ENCODE measurements at regions of chr15 and their contacts with region 1.

Region 1: DNA sequence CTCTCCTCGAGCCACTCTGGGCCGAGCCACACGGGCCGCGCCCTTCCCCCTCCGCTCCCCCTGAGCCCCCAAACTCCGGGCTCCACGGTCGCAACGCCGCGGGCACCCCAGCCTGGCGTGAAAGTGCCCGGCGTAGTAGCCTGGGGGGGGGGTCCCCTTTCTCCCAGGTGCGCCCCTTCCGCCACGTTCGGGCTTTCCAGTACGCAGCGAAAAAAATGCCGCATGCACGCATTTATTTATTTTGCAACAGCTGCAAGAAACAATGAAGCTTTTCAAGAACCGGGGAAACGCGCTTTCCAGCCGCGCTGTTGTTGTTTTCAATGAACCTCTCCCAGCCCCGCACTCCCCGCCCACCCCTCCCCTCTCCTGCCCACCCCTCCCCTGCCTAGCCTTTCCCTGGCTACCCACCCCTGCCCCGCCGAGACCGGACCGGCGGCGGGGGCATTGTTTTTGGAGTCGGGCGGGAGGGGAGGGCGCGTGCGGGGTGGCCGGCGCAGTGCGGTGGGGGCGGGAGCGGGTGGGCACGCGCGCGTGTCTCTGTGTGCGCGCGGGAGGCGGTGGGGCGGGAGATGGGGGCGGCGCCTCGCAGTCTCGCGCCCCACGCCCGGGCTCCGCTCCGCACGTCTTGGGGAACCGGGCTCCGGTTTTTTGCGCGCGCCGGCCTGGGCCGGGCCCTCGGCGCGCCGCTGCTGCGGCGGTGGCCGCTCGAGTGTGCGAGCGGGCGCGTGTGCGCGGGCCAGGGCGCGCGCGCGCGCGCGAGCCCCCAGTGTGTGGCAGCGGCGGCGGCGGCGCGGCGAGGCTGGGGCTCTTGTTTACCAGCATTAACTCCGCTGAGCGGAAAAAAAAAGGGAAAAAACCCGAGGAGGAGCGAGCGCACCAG is at the start of gene IGF1R:
- DNase-seq: peak; percentile 94 to 95
- ATAC-seq: peak; percentile 73 to 91 (median 79)
- H3K4me3 ChIP-seq: peak within 1 kb of the TSS; percentile 84
- H3K4me3 Mint-ChIP-seq: peak within 1 kb of the TSS; percentile 91
- H3K27ac ChIP-seq: peak within 1 kb of the TSS; percentile 53
- H3K27ac Mint-ChIP-seq: peak within 1 kb of the TSS; percentile 60 to 99
- H3K4me1 ChIP-seq: peaks cover 24% of the 10 kb centered on the region
- H3K4me1 Mint-ChIP-seq: peaks cover 28 to 35% of the 10 kb centered on the region in 2 donors
- H3K27me3 ChIP-seq: peaks cover 15% of the 10 kb centered on the region
- H3K27me3 Mint-ChIP-seq: peaks cover 33 to 36% of the 10 kb centered on the region in 2 donors
- CTCF ChIP-seq: no peak
- total RNA-seq, gene IGF1R: 47.3 to 50.7 (median 49.0) TPM

Region 2: DNA sequence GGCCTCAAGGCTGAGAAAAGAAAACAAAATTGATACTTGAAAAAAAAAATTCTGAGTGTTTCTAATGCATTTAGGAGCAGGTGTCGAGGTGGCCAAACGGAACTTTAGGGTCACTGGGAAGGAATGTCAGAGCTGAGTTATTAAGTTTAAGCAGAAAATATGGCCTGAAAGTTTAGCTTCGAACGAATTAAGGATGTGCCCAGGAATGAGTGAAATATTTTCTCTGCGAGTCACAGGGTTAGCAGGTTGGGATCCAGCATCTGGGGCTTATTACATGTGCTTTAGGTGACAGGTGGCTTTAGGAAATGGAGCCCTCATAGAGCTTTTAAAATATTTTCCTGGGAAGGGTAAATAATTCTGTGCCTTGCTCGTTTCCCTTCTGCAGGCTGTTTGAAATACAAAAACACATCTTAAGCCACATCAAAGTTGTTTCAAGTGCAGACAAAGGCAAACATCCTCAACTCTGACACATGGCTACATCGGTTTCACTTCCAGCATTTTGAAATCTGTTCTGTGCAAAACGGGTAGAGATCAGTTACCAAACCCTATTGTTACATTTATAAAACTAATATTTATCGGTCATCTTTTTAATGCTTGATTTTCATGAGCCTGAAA is 830.6 kb before region 1 on chr15:
- intact Hi-C with region 1: no loop called
- DNase-seq: no peak
- ATAC-seq: no peak
- H3K4me3 ChIP-seq: no peak overlapping the region
- H3K4me3 Mint-ChIP-seq: no peak overlapping the region
- H3K27ac ChIP-seq: no peak overlapping the region
- H3K27ac Mint-ChIP-seq: no peak overlapping the region
- H3K4me1 ChIP-seq: no peaks in the 10 kb centered on the region
- H3K4me1 Mint-ChIP-seq: no peaks in the 10 kb centered on the region
- H3K27me3 ChIP-seq: no peaks in the 10 kb centered on the region
- H3K27me3 Mint-ChIP-seq: peaks cover 0 to 8% of the 10 kb centered on the region in 2 donors
- CTCF ChIP-seq: no peak

Region 3: DNA sequence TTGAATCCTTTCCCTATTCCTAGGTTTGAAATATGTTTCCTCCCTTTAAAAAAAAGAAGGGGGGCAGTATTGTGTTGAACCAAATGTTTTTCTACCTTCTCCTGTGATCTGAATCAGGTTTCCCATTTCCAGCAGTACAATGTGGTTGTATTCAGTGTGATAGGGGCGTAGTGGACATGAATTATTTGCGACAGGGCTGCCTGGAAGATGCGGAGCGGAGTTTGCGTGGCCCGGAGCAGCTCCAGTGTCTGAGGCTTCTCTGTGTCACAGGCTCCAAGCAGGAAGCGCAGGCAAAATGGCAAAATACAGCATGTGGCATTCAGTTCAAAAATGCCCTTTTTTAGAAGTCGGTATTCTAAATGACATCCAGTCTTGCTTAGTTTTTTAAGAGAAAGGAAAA is 205.1 kb after region 1 on chr15:
- intact Hi-C with region 1: loop called (anchors 1 kb)
- DNase-seq: peak; percentile 81 to 84
- ATAC-seq: peak; percentile 59 to 68 (median 63)
- H3K4me3 ChIP-seq: peak overlapping the region; percentile 86
- H3K4me3 Mint-ChIP-seq: peak overlapping the region; percentile 99
- H3K27ac ChIP-seq: peak overlapping the region; percentile 81
- H3K27ac Mint-ChIP-seq: peak overlapping the region; percentile 96 to 98
- H3K4me1 ChIP-seq: peaks cover 25% of the 10 kb centered on the region
- H3K4me1 Mint-ChIP-seq: peaks cover 38 to 44% of the 10 kb centered on the region in 2 donors
- H3K27me3 ChIP-seq: no peaks in the 10 kb centered on the region
- H3K27me3 Mint-ChIP-seq: no peaks in the 10 kb centered on the region
- CTCF ChIP-seq: no peak

Measured in natural killer cell (primary cell).